BJ (cell line): ENCODE measurements at regions of chr1 and their contacts with region 1.

Region 1: GRCh38 chr1:34865981-34866761 is 6.6 kb upstream of the SMIM12 start:
- DNase-seq: no peak
- H3K4me3 ChIP-seq: peak overlapping the region; percentile 69
- H3K27me3 ChIP-seq: peaks cover 5% of the 10 kb centered on the region
- CTCF ChIP-seq: peak; percentile 98

Region 2: DNA sequence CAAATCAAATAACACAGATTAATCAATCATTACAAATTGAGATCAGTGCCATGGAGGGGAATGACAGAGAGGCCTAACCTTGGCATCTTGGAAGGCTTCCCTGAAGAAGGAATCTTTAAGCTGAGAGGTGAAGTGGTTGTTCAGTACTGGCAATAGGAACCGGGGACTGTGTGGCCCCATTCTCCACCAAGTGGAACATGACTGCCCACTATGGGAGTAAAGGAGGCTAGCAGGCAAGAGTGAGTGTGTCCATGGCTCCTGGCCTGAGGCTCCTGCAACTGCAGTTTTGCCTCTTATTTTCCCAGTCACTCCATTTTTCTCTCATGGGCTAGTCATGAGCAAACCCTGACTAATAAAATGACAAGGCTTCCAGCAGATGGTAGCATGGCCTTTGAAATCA is 223.5 kb before region 1 on chr1:
- CTCF ChIA-PET with region 1: no interaction called
- POLR2A ChIA-PET with region 1: no interaction called
- DNase-seq: no peak
- H3K4me3 ChIP-seq: no peak overlapping the region
- H3K27me3 ChIP-seq: no peaks in the 10 kb centered on the region
- CTCF ChIP-seq: no peak

Region 3: DNA sequence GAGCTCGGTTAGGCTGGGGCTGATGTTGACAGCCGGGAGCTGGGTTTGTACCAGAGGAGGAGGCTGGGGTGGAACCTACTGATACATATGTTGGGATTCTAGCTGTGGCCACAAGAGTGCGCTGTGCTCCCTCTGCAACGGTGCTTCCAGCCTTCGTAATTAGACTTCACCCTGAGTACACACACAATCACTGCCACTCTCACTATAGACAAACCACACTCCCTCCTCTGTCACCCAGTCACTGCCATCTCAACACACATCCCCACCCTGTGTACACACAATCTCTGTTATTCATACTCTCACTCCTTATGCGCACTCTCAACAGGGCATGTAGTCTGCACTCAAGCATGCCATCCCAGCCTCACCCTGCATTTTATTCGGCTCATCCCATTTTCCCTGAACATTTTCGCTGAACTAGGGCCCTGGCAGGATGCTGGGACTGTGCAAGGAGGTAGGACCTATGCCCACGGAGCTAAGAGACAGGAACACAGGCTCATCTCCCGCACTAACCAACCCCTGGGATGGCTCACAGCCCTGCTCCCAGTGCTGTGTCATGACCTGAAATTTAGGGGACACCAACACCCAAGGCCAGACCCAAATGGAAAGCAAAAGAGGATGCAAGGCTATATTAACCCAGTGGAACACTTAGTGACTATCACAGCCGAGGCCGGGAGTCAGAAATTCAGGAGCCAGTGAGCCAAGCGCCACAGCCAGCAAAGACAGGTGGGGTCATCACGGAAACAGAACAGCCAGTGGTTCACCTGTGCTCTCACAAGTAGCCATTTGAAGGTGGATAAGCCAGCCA is 79.4 kb before region 1 on chr1:
- CTCF ChIA-PET with region 1: interaction called, 31 read pairs
- POLR2A ChIA-PET with region 1: no interaction called
- DNase-seq: no peak
- H3K4me3 ChIP-seq: no peak overlapping the region
- H3K27me3 ChIP-seq: peaks cover 10% of the 10 kb centered on the region
- CTCF ChIP-seq: peak; percentile 84

Region 4: GRCh38 chr1:34852677-34853217 is 13.4 kb before region 1 on chr1:
- CTCF ChIA-PET with region 1: interaction called, 69 read pairs
- POLR2A ChIA-PET with region 1: interaction called, 5 read pairs
- DNase-seq: peak; percentile 70
- H3K4me3 ChIP-seq: no peak overlapping the region
- H3K27me3 ChIP-seq: no peaks in the 10 kb centered on the region
- CTCF ChIP-seq: peak; percentile 93

Region 5: DNA sequence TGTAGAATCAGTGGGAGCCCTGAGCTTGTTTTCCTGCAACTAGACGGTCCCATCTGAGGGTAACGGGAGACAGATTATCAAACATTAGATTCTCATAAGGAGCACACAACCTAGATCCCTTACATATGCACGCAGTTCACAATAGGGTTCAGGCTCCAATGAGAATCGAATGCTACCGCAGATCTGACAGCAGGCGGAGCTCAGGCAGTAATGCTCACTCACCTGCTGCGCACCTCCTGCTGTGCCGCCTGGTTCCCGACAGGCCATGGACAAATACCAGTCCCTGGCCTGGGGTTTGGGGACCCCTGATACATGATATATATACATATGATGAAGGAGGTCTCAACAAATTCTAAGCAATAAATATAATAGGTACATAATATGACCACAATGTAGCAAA is 13.1 kb after region 1 on chr1:
- CTCF ChIA-PET with region 1: interaction called, 29 read pairs
- POLR2A ChIA-PET with region 1: no interaction called
- DNase-seq: no peak
- H3K4me3 ChIP-seq: no peak overlapping the region
- H3K27me3 ChIP-seq: peaks cover 12% of the 10 kb centered on the region
- CTCF ChIP-seq: no peak

Region 6: GRCh38 chr1:34884961-34885360 is 18.8 kb after region 1 on chr1:
- CTCF ChIA-PET with region 1: interaction called, 29 read pairs
- POLR2A ChIA-PET with region 1: no interaction called
- DNase-seq: no peak
- H3K4me3 ChIP-seq: no peak overlapping the region
- H3K27me3 ChIP-seq: peaks cover 9% of the 10 kb centered on the region
- CTCF ChIP-seq: no peak